ENCODE measurements at regions of chr14 and their contacts with region 1.

Region 1: GRCh38 chr14:95442633-95443021 is 73.8 kb downstream of the SYNE3 start:
- DNase-seq: peak; percentile 28
- ATAC-seq: peak; percentile 98
- H3K4me3 ChIP-seq: no peak overlapping the region
- H3K27ac ChIP-seq: no peak overlapping the region
- H3K4me1 ChIP-seq: no peaks in the 10 kb centered on the region
- H3K27me3 ChIP-seq: no peaks in the 10 kb centered on the region
- CTCF ChIP-seq: peak; percentile 78 to 92 (median 87)
- EP300 ChIP-seq: no peak
- POLR2A ChIP-seq: no peak
- RAD21 ChIP-seq: peak; percentile 95

Region 2: GRCh38 chr14:95431199-95432143 is 11.2 kb before region 1 on chr14:
- CTCF ChIA-PET with region 1: interaction called, 11 read pairs
- POLR2A ChIA-PET with region 1: no interaction called
- RAD21 ChIA-PET with region 1: interaction called, 6 read pairs
- SMC1A ChIA-PET with region 1: interaction called, 10 read pairs
- in situ Hi-C with region 1: no loop called
- intact Hi-C with region 1: no loop called
- DNase-seq: no peak
- ATAC-seq: peak; percentile 76
- H3K4me3 ChIP-seq: no peak overlapping the region
- H3K27ac ChIP-seq: no peak overlapping the region
- H3K4me1 ChIP-seq: no peaks in the 10 kb centered on the region
- H3K27me3 ChIP-seq: no peaks in the 10 kb centered on the region
- CTCF ChIP-seq: peak; percentile 28 to 46 (median 42); a peak in 4 of 6 replicates
- EP300 ChIP-seq: no peak
- POLR2A ChIP-seq: no peak
- RAD21 ChIP-seq: peak; percentile 61

Region 3: GRCh38 chr14:95483309-95484165 is 40.9 kb after region 1 on chr14:
- CTCF ChIA-PET with region 1: interaction called, 20 read pairs
- POLR2A ChIA-PET with region 1: no interaction called
- RAD21 ChIA-PET with region 1: interaction called, 4 read pairs
- SMC1A ChIA-PET with region 1: interaction called, 5 read pairs
- in situ Hi-C with region 1: no loop called
- intact Hi-C with region 1: no loop called
- DNase-seq: no peak
- ATAC-seq: no peak
- H3K4me3 ChIP-seq: no peak overlapping the region
- H3K27ac ChIP-seq: no peak overlapping the region
- H3K4me1 ChIP-seq: peaks cover 24% of the 10 kb centered on the region
- H3K27me3 ChIP-seq: no peaks in the 10 kb centered on the region
- CTCF ChIP-seq: no peak
- EP300 ChIP-seq: no peak
- POLR2A ChIP-seq: no peak
- RAD21 ChIP-seq: no peak

Region 4: GRCh38 chr14:95515596-95516552 is 73.2 kb after region 1 on chr14:
- CTCF ChIA-PET with region 1: interaction called, 525 read pairs
- POLR2A ChIA-PET with region 1: no interaction called
- RAD21 ChIA-PET with region 1: interaction called, 13 read pairs
- SMC1A ChIA-PET with region 1: interaction called, 12 read pairs
- in situ Hi-C with region 1: no loop called
- intact Hi-C with region 1: no loop called
- DNase-seq: no peak
- ATAC-seq: peak; percentile 87
- H3K4me3 ChIP-seq: peak overlapping the region; percentile 85
- H3K27ac ChIP-seq: peak overlapping the region; percentile 90
- H3K4me1 ChIP-seq: peaks cover 53% of the 10 kb centered on the region
- H3K27me3 ChIP-seq: no peaks in the 10 kb centered on the region
- CTCF ChIP-seq: peak; percentile 35 to 58 (median 46)
- EP300 ChIP-seq: 0 out of 4 replicates have a peak, but pooled peaks of 1 of the 2 experiments have one; percentile 6
- POLR2A ChIP-seq: 0 out of 2 replicates have a peak, but pooled peaks have one; percentile 59
- RAD21 ChIP-seq: peak; percentile 44

Region 5: GRCh38 chr14:95534299-95535225 is 91.9 kb after region 1 on chr14 and contains the start of gene GLRX5:
- CTCF ChIA-PET with region 1: interaction called, 525 read pairs
- POLR2A ChIA-PET with region 1: interaction called, 7 read pairs
- RAD21 ChIA-PET with region 1: interaction called, 171 read pairs
- SMC1A ChIA-PET with region 1: interaction called, 187 read pairs
- in situ Hi-C with region 1: loop called (anchors 5 kb)
- intact Hi-C with region 1: no loop called
- DNase-seq: peak; percentile 100
- ATAC-seq: peak; percentile 92
- H3K4me3 ChIP-seq: peak within 1 kb of the TSS; percentile 93
- H3K27ac ChIP-seq: peak within 1 kb of the TSS; percentile 87
- H3K4me1 ChIP-seq: peaks cover 8% of the 10 kb centered on the region; the same call in 1 of the 2 replicates
- H3K27me3 ChIP-seq: no peaks in the 10 kb centered on the region
- CTCF ChIP-seq: no peak
- EP300 ChIP-seq: no peak
- POLR2A ChIP-seq: peak; percentile 76
- RAD21 ChIP-seq: no peak
- polyA plus RNA-seq, gene GLRX5: 13.7 to 28.8 TPM

Region 6: GRCh38 chr14:95759941-95760340 is 317.3 kb after region 1 on chr14:
- CTCF ChIA-PET with region 1: no interaction called
- POLR2A ChIA-PET with region 1: no interaction called
- RAD21 ChIA-PET with region 1: no interaction called
- SMC1A ChIA-PET with region 1: no interaction called
- in situ Hi-C with region 1: no loop called
- intact Hi-C with region 1: no loop called
- DNase-seq: no peak
- ATAC-seq: no peak
- H3K4me3 ChIP-seq: no peak overlapping the region
- H3K27ac ChIP-seq: no peak overlapping the region
- H3K4me1 ChIP-seq: no peaks in the 10 kb centered on the region
- H3K27me3 ChIP-seq: no peaks in the 10 kb centered on the region; a peak in 1 of 4 replicates
- CTCF ChIP-seq: no peak
- EP300 ChIP-seq: no peak
- POLR2A ChIP-seq: no peak
- RAD21 ChIP-seq: no peak

Region 7: DNA sequence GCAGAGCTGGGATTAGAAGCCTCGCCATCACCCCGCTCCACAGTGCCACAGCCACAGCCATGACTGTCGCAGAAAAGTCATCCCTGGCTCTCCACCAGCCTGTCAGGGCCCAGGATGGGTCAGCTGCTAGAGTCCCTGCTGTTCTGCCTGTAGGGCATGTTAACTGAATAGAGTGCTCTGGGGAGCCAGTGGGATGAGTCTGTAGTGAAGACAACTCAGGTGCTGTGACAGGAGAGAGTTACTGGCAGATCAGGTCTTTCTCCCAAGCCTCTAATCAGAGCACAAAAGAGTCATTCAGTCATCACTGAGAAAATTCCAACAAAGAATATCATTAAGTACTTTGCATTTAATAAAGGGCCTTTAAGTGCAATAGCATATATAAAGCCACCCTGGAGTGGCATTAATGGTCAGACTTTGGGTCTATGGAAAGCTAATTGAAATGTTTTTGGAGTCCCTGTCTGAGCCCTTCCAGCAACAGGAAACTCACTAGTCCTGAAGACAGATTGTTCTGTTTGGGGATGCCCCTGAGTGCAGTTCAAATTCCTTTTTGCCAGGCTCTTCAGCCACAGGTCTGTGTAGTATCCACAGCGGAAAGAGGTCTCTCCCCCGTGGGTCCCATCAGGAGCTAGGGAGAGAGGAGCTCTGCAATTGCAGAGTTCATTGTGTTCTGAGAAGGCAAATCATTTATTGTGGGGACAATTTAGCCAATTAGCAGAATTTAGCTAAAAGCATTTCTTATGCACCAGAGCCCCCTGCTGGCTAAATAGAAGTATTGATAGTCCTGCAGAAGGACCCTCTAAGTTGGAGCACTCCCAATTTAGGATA is 551.4 kb after region 1 on chr14:
- CTCF ChIA-PET with region 1: interaction called, 3 read pairs
- POLR2A ChIA-PET with region 1: no interaction called
- RAD21 ChIA-PET with region 1: no interaction called
- SMC1A ChIA-PET with region 1: no interaction called
- in situ Hi-C with region 1: loop called (anchors 10 kb)
- intact Hi-C with region 1: no loop called
- DNase-seq: peak; percentile 17
- ATAC-seq: peak; percentile 75
- H3K4me3 ChIP-seq: no peak overlapping the region
- H3K27ac ChIP-seq: no peak overlapping the region
- H3K4me1 ChIP-seq: no peaks in the 10 kb centered on the region
- H3K27me3 ChIP-seq: peaks cover 0 to 2% of the 10 kb centered on the region in 2 experiments; a peak in 2 of 4 replicates
- CTCF ChIP-seq: peak; percentile 78 to 80 (median 79)
- EP300 ChIP-seq: no peak
- POLR2A ChIP-seq: no peak
- RAD21 ChIP-seq: peak; percentile 93